ENCODE measurements at regions of chr17 and their contacts with region 1.

Region 1: GRCh38 chr17:47949136-47949759 is 7.9 kb downstream of the PNPO start:
- DNase-seq: peak; percentile 95
- ATAC-seq: peak; percentile 88

Region 2: GRCh38 chr17:47850692-47851573 is 98.3 kb before region 1 on chr17 and contains the start of gene SP6:
- intact Hi-C with region 1: no loop called
- DNase-seq: peak; percentile 74
- ATAC-seq: peak; percentile 93
- total RNA-seq, gene SP6: 0.15 TPM

Region 3: GRCh38 chr17:47905221-47905781 is 43.9 kb before region 1 on chr17:
- intact Hi-C with region 1: loop called (anchors 5 kb)
- DNase-seq: peak; percentile 84
- ATAC-seq: peak; percentile 87

Region 4: DNA sequence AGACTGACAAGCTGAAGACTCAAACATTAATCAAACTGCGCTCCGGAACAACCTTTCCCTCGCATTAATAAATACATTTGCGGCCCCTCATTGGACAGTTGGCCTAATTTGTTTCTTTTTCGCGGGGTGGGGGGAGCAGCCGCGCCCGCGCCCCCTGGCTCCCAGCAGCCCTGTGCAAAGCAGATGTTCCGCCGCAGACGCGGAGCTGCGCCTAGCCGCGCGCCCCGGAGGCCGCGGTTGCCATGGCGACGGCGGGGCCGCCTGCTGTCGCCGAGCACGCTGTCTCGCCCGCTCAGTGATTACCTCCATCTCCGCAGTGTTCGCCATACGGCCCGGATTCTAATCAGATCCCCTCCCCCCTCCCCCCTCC is 62.9 kb after region 1 on chr17:
- intact Hi-C with region 1: no loop called
- DNase-seq: peak; percentile 68
- ATAC-seq: peak; percentile 68

Measured in left ventricle myocardium superior (tissue), 1 donor.